BJ (cell line): ENCODE measurements at regions of chr10 and their contacts with region 1.

Region 1: DNA sequence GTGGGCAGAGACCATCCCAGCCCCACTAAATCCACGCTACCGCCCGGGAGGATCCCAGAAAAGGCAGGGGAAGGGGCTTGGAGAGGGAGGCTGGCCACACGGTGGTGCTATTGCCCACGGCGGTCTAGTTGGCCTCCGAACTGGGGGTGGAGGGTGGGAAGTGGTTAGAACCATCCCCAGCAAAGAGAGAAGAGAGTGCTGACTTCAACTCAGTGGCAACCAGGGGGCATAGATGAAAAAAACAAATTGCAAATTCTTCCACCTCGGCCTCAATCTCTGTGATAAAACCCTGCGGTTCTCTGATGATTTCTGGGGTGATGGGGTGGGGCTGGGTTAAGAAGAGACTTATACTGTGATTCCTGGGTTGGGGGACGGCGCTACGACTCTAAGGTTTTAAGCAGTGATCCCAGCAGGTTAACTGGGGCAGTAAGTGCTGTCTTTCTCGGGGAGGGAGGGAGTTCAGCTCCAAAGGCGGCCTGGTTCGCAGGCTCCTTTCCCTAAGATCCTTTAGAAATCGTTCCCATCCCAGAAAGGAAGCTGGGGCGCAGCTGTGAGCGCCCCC is 154.5 kb upstream of the LYZL2 start:
- DNase-seq: no peak
- H3K4me3 ChIP-seq: peak overlapping the region; percentile 18; the same call in 1 of the 2 replicates
- H3K27me3 ChIP-seq: no peaks in the 10 kb centered on the region
- CTCF ChIP-seq: peak; percentile 95

Region 2: GRCh38 chr10:29865700-29866340 is 918.2 kb before region 1 on chr10:
- CTCF ChIA-PET with region 1: no interaction called
- POLR2A ChIA-PET with region 1: no interaction called
- DNase-seq: no peak
- H3K4me3 ChIP-seq: no peak overlapping the region
- H3K27me3 ChIP-seq: peaks cover 13% of the 10 kb centered on the region
- CTCF ChIP-seq: no peak

Region 3: GRCh38 chr10:30510169-30510930 is 273.7 kb before region 1 on chr10:
- CTCF ChIA-PET with region 1: no interaction called
- POLR2A ChIA-PET with region 1: no interaction called
- DNase-seq: no peak
- H3K4me3 ChIP-seq: no peak overlapping the region
- H3K27me3 ChIP-seq: no peaks in the 10 kb centered on the region; the same call in 1 of the 2 replicates
- CTCF ChIP-seq: peak; percentile 33; the same call in 1 of the 2 replicates

Region 4: GRCh38 chr10:30751678-30752331 is 32.2 kb before region 1 on chr10:
- CTCF ChIA-PET with region 1: interaction called, 13 read pairs
- POLR2A ChIA-PET with region 1: no interaction called
- DNase-seq: no peak
- H3K4me3 ChIP-seq: no peak overlapping the region
- H3K27me3 ChIP-seq: no peaks in the 10 kb centered on the region
- CTCF ChIP-seq: peak; percentile 89

Region 5: DNA sequence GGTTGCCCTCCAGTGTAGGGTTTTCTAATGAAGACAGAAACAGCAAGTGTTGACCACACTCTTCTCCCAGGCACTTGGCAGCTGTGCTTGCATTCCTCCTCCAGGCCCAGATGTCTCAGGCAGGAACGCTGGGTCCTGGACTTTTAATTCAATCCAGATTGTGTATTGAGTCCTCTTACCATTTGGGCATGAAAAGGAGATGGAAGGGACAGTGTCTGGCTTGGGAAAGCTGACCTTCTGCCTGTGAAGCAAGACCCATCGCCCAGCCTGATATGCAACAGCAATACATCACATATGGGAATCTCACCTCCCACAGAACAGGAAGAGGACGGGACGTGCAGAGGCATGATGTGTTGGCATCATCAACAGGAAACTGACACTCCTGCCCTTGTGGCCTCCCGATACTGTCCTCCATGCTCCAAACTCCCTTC is 19.9 kb after region 1 on chr10:
- CTCF ChIA-PET with region 1: interaction called, 10 read pairs
- POLR2A ChIA-PET with region 1: no interaction called
- DNase-seq: peak; percentile 75
- H3K4me3 ChIP-seq: no peak overlapping the region
- H3K27me3 ChIP-seq: no peaks in the 10 kb centered on the region
- CTCF ChIP-seq: no peak

Region 6: GRCh38 chr10:30812018-30812851 is 28.2 kb after region 1 on chr10:
- CTCF ChIA-PET with region 1: interaction called, 14 read pairs
- POLR2A ChIA-PET with region 1: no interaction called
- DNase-seq: peak; percentile 65
- H3K4me3 ChIP-seq: no peak overlapping the region
- H3K27me3 ChIP-seq: no peaks in the 10 kb centered on the region
- CTCF ChIP-seq: no peak

Region 7: GRCh38 chr10:31004611-31005193 is 220.7 kb after region 1 on chr10:
- CTCF ChIA-PET with region 1: no interaction called
- POLR2A ChIA-PET with region 1: interaction called, 15 read pairs
- DNase-seq: peak; percentile 60
- H3K4me3 ChIP-seq: no peak overlapping the region
- H3K27me3 ChIP-seq: no peaks in the 10 kb centered on the region
- CTCF ChIP-seq: no peak